Astrocyte of the cerebellum (primary cell): ENCODE measurements at regions of chr18 and their contacts with region 1.

Region 1: GRCh38 chr18:27843783-27844777 is 332.9 kb downstream of the CDH2 start:
- DNase-seq: peak; percentile 71
- H3K4me3 ChIP-seq: no peak overlapping the region
- CTCF ChIP-seq: no peak

Region 2: DNA sequence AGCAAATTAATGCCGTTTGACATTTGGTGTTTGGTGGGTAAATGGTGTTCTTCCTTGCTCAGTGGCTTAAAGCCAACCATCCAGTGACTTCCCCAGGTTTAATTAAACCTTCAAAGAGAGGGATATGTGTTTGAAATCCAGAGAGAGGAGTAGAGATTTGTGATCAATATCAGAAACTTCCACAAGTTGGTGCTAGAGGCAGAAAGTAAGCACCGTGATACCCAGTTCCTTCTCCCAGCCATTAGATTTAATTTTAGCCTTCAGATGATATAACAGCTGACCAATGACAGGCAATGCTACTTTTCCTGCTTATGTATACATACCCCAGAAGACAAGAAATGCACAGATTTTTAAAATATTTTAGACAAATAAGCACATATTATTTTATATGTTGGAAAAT is 65.6 kb before region 1 on chr18:
- in situ Hi-C with region 1: no loop called
- DNase-seq: peak; percentile 8
- H3K4me3 ChIP-seq: no peak overlapping the region
- CTCF ChIP-seq: peak; percentile 72

Region 3: DNA sequence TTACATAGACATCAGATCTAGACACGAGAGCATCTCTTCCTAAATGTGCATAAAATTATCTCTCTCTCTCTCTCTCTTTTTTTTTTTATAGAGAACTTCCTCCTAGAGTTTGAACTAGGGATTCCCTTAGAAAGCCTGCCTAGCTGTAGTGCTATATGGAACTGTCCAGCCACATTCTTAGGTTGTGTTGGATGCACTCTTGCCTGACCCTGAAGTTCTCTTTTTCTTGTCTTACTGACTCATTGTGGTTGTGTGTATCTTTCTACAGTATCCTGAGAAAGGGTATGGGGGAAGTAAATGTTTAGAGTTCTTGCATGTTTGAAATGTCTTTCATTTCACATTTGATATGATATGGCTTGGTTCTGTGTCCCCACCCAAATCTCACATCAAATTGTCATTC is 35.4 kb before region 1 on chr18:
- in situ Hi-C with region 1: loop called (anchors 5 kb)
- DNase-seq: no peak
- H3K4me3 ChIP-seq: no peak overlapping the region
- CTCF ChIP-seq: no peak

Region 4: GRCh38 chr18:28045176-28045810 is 201.2 kb after region 1 on chr18:
- in situ Hi-C with region 1: no loop called
- DNase-seq: no peak
- H3K4me3 ChIP-seq: no peak overlapping the region
- CTCF ChIP-seq: no peak